ENCODE measurements at regions of chr16 and their contacts with region 1.

Region 1: GRCh38 chr16:22001591-22001990 is 675 bp upstream of the PDZD9 start:
- DNase-seq: peak in 1 of 2 experiments; percentile 81
- H3K4me3 ChIP-seq: peak overlapping the region; percentile 48; the same call in 1 of the 2 replicates
- H3K27ac ChIP-seq: peak overlapping the region; percentile 54
- H3K4me1 ChIP-seq: peaks cover 20% of the 10 kb centered on the region
- H3K27me3 ChIP-seq: no peaks in the 10 kb centered on the region
- CTCF ChIP-seq: no peak

Region 2: DNA sequence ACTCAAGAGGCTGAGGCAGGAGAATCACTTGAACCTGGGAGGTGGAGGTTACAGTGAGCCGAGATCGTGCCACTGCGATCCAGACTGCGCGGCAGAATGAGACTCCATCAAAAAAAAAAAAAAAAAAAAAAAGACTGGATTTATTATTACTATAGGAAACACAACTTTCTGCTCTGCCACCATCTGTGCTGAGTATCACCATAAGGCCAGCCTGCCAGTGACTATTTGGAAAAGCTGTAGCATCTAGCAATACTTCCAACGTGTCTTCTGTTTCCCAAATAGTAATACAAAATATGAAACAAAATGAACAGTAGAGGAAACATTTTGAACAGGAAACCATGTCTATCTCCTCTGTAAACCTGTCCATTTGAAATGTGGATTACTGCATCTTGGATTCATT is 679.9 kb before region 1 on chr16:
- CTCF ChIA-PET with region 1: no interaction called
- POLR2A ChIA-PET with region 1: interaction called, 15 read pairs
- intact Hi-C with region 1: no loop called
- DNase-seq: no peak
- H3K4me3 ChIP-seq: no peak overlapping the region
- H3K27ac ChIP-seq: no peak overlapping the region
- H3K4me1 ChIP-seq: no peaks in the 10 kb centered on the region
- H3K27me3 ChIP-seq: no peaks in the 10 kb centered on the region
- CTCF ChIP-seq: no peak

Region 3: GRCh38 chr16:21989133-21989532 is 12.5 kb before region 1 on chr16:
- CTCF ChIA-PET with region 1: interaction called, 11 read pairs
- POLR2A ChIA-PET with region 1: no interaction called
- intact Hi-C with region 1: no loop called
- DNase-seq: no peak
- H3K4me3 ChIP-seq: no peak overlapping the region
- H3K27ac ChIP-seq: no peak overlapping the region
- H3K4me1 ChIP-seq: no peaks in the 10 kb centered on the region
- H3K27me3 ChIP-seq: no peaks in the 10 kb centered on the region
- CTCF ChIP-seq: no peak

Region 4: DNA sequence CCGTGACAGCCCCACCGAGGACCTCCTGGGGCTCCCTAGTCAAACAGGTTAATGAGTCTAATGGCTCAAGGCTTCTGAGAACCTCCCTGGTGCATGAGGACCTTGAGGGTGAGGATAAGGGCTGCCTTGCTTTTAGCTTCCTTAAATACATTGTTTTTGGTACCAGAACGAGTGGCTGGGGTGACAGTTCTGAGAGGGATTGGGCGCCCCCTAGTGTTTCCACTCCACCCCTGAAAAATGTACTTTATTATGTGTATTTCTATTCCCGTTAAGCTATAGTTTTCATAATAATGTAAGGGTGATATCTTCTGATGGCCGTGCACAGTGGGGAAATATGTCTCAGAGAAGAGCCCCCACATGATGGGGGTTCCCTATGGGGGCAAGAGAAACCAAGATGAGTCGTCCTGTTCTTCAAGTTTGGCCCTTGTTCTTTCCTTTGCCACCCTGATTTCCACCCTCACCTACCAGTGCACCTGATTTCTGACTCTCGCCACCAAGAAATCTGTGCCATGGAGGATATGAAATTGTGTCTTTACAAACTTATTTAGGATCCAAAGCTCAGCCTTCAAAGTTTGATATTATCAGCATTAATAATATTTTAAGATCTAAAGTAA is 76.2 kb after region 1 on chr16:
- CTCF ChIA-PET with region 1: interaction called, 32 read pairs
- POLR2A ChIA-PET with region 1: interaction called, 3 read pairs
- intact Hi-C with region 1: loop called (anchors 1 kb)
- DNase-seq: peak; percentile 36 to 67
- H3K4me3 ChIP-seq: no peak overlapping the region
- H3K27ac ChIP-seq: no peak overlapping the region
- H3K4me1 ChIP-seq: no peaks in the 10 kb centered on the region
- H3K27me3 ChIP-seq: no peaks in the 10 kb centered on the region
- CTCF ChIP-seq: peak; percentile 93

Region 5: DNA sequence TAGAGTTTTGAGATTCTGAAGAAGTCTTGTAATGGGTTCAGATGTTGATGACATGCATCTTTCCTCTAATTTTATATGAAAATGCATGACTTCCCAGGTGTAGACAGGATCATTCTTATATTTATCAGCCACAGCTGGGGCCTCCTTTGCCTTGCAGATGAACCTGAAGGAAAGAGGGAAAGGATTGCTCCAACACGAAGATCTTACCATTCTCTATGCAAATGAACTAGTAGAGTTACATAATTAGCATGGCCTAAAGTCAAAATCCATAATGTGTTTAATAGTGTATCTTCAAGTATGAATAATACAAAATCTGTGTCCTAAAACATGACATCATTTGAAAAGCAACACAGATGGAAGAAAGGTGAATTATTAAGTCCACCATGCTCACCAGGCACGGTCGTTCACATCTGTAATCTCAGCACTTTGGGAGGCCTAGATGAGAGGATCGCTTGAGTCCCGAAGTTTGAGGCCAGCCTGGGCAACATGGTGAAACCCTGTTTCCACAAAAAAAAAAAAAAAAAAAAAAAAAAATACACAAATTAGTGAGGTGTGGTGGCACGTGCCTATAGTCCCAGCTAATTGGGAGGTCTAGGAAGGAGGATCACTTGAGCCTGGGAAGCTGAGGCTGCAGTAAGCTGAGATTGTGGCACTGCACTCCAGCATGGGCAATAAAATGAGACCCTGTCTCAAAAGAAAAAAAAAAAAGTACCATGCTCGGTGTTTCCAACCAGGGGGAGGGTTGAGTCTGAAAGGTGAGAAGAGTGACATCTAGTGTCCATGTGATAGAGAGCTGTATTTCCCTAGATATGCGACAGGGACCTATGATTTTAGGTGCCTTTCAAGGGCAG is 97.0 kb after region 1 on chr16:
- CTCF ChIA-PET with region 1: interaction called, 7 read pairs
- POLR2A ChIA-PET with region 1: no interaction called
- intact Hi-C with region 1: loop called (anchors 1 kb)
- DNase-seq: peak; percentile 27 to 55
- H3K4me3 ChIP-seq: peak overlapping the region; percentile 34; the same call in 1 of the 2 replicates
- H3K27ac ChIP-seq: no peak overlapping the region
- H3K4me1 ChIP-seq: no peaks in the 10 kb centered on the region
- H3K27me3 ChIP-seq: no peaks in the 10 kb centered on the region
- CTCF ChIP-seq: peak; percentile 66

Region 6: GRCh38 chr16:22252317-22252716 is 250.7 kb after region 1 on chr16:
- CTCF ChIA-PET with region 1: interaction called, 20 read pairs
- POLR2A ChIA-PET with region 1: no interaction called
- intact Hi-C with region 1: no loop called
- DNase-seq: no peak
- H3K4me3 ChIP-seq: no peak overlapping the region
- H3K27ac ChIP-seq: no peak overlapping the region
- H3K4me1 ChIP-seq: no peaks in the 10 kb centered on the region
- H3K27me3 ChIP-seq: no peaks in the 10 kb centered on the region
- CTCF ChIP-seq: no peak

Region 7: GRCh38 chr16:22297114-22297878 is 295.7 kb after region 1 on chr16 and contains the start of gene POLR3E:
- CTCF ChIA-PET with region 1: no interaction called
- POLR2A ChIA-PET with region 1: no interaction called
- intact Hi-C with region 1: loop called (anchors 1 kb)
- DNase-seq: peak; percentile 89 to 100
- H3K4me3 ChIP-seq: peak within 1 kb of the TSS; percentile 78
- H3K27ac ChIP-seq: peak within 1 kb of the TSS; percentile 84
- H3K4me1 ChIP-seq: no peaks in the 10 kb centered on the region
- H3K27me3 ChIP-seq: no peaks in the 10 kb centered on the region
- CTCF ChIP-seq: peak; percentile 86
- total RNA-seq, gene POLR3E: 65.2 and 70.9 TPM in 2 replicates